ENCODE measurements at regions of chr17 and their contacts with region 1.

Region 1: DNA sequence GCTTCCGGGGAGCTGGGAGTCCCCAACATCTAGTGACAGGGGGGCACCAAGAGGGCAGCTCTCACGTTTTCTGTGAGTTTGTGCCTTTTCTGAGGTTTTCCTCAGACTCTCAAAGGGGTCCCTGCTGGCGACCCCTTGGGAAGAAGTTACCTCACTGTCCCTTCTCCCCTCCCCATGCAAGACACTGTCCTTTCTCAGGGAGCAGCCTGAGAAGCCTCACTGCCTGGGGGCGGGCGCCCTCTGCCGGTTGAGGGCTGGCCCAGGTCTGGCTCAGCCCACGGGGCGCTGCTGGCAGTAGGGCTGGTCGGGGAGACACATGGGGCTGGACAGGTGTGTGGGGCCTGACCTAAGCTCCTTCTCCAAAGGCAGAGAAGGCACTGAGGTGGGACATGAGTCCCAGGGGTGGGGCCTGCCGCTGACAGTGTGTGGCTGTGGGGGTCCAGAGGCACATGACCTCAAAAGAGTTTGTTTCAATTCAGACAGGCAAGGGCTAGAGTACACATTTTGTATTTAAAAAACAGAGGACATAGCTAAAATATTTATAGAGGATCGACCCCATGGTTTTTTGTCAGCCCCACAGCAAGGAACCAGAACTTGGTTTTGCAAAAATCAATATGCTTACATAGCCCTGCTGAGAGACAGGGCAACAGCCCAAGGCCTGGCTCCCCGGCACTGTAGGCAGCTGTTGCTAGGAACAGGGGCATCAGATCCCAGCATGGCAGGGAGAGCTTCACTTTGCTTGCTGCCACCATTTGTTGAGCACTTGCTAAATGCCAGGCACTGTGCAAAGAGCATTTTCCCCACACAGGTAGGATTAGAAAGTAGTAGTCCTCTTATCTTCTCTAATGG is 18.5 kb upstream of the ALDH3A1 start:
- DNase-seq: peak; percentile 90
- ATAC-seq: peak; percentile 91
- H3K4me3 Mint-ChIP-seq: no peak overlapping the region
- H3K27ac Mint-ChIP-seq: no peak overlapping the region
- H3K4me1 Mint-ChIP-seq: 0 out of 2 replicates have a peak, but pooled peaks cover 2% of the 10 kb centered on the region
- H3K27me3 Mint-ChIP-seq: no peaks in the 10 kb centered on the region
- CTCF ChIP-seq: peak; percentile 64; the same call in 1 of the 2 replicates

Region 2: DNA sequence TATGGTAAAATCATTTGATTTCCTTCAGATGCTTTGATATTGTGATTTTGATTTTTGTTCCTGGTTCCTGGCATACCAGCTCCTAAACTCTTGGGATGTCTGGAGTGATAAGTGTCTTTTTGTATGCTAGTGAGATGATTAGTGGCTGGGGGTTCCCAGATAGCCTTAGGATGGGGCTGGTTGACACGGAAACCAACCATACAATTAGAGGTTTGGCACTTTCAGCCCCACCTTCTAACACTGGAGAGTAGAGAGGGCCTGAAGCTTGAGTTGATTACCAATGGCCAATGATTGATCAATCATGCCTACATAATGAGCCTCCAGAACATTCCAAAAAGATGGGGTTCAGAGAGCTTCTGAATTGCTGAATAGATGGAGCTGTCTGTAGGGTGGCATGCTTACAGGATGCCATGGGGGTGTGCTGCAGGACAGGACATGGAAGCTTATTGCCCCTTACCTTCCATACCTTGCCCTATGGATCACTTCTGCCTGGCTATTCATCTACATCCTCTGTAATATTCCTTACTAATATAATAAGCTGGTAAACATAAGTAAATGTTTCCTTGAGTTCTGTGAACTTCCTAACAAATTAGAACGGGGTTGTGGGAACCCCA is 332.8 kb before region 1 on chr17:
- CTCF ChIA-PET with region 1: interaction called, 21 read pairs
- POLR2A ChIA-PET with region 1: no interaction called
- DNase-seq: no peak
- ATAC-seq: peak; percentile 54
- H3K4me3 Mint-ChIP-seq: no peak overlapping the region; the same call in 1 of the 2 replicates
- H3K27ac Mint-ChIP-seq: peak overlapping the region; percentile 60
- H3K4me1 Mint-ChIP-seq: peaks cover 59% of the 10 kb centered on the region
- H3K27me3 Mint-ChIP-seq: no peaks in the 10 kb centered on the region
- CTCF ChIP-seq: no peak

Region 3: GRCh38 chr17:19579867-19580565 is 186.6 kb before region 1 on chr17:
- CTCF ChIA-PET with region 1: interaction called, 10 read pairs
- POLR2A ChIA-PET with region 1: no interaction called
- DNase-seq: peak; percentile 30
- ATAC-seq: peak; percentile 60
- H3K4me3 Mint-ChIP-seq: peak overlapping the region; percentile 78
- H3K27ac Mint-ChIP-seq: no peak overlapping the region
- H3K4me1 Mint-ChIP-seq: peaks cover 22% of the 10 kb centered on the region
- H3K27me3 Mint-ChIP-seq: peaks cover 34% of the 10 kb centered on the region
- CTCF ChIP-seq: no peak

Region 4: DNA sequence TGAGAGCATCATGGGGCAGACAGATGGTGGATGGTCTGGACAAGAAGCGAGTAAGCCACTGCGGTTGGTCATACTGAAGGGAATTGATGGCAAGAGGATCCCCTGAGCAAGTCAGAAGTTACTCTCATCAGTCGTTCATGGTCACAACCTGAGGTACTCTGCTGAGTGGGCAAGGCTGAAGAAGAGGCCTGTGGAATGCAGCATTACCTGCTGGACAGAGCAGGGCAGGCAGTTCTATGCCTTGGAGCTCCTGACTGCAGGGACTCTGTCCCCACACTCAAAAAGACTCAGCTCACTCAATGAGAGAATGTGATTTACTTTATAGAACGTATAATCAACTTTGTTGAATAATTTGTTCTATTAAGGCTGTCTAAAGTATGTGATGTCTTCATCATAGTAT is 89.7 kb before region 1 on chr17:
- CTCF ChIA-PET with region 1: no interaction called
- POLR2A ChIA-PET with region 1: no interaction called
- DNase-seq: no peak
- ATAC-seq: no peak
- H3K4me3 Mint-ChIP-seq: no peak overlapping the region
- H3K27ac Mint-ChIP-seq: no peak overlapping the region
- H3K4me1 Mint-ChIP-seq: peaks cover 2% of the 10 kb centered on the region; the same call in 1 of the 2 replicates
- H3K27me3 Mint-ChIP-seq: no peaks in the 10 kb centered on the region
- CTCF ChIP-seq: no peak

Region 5: GRCh38 chr17:19718604-19719354 is 47.9 kb before region 1 on chr17:
- CTCF ChIA-PET with region 1: interaction called, 21 read pairs
- POLR2A ChIA-PET with region 1: no interaction called
- DNase-seq: peak; percentile 75
- ATAC-seq: peak; percentile 82
- H3K4me3 Mint-ChIP-seq: no peak overlapping the region
- H3K27ac Mint-ChIP-seq: no peak overlapping the region
- H3K4me1 Mint-ChIP-seq: peaks cover 6% of the 10 kb centered on the region; the same call in 1 of the 2 replicates
- H3K27me3 Mint-ChIP-seq: no peaks in the 10 kb centered on the region; the same call in 1 of the 2 replicates
- CTCF ChIP-seq: peak; percentile 18; the same call in 1 of the 2 replicates

Region 6: GRCh38 chr17:19753049-19753444 is 13.6 kb before region 1 on chr17:
- CTCF ChIA-PET with region 1: interaction called, 23 read pairs
- POLR2A ChIA-PET with region 1: no interaction called
- DNase-seq: no peak
- ATAC-seq: no peak
- H3K4me3 Mint-ChIP-seq: no peak overlapping the region
- H3K27ac Mint-ChIP-seq: no peak overlapping the region
- H3K4me1 Mint-ChIP-seq: peaks cover 14% of the 10 kb centered on the region
- H3K27me3 Mint-ChIP-seq: peaks cover 2% of the 10 kb centered on the region; the same call in 1 of the 2 replicates
- CTCF ChIP-seq: no peak

Measured in WTC11 (cell line).